Ascending aorta (tissue), 2 donors: ENCODE measurements at regions of chr19 and their contacts with region 1.

Region 1: DNA sequence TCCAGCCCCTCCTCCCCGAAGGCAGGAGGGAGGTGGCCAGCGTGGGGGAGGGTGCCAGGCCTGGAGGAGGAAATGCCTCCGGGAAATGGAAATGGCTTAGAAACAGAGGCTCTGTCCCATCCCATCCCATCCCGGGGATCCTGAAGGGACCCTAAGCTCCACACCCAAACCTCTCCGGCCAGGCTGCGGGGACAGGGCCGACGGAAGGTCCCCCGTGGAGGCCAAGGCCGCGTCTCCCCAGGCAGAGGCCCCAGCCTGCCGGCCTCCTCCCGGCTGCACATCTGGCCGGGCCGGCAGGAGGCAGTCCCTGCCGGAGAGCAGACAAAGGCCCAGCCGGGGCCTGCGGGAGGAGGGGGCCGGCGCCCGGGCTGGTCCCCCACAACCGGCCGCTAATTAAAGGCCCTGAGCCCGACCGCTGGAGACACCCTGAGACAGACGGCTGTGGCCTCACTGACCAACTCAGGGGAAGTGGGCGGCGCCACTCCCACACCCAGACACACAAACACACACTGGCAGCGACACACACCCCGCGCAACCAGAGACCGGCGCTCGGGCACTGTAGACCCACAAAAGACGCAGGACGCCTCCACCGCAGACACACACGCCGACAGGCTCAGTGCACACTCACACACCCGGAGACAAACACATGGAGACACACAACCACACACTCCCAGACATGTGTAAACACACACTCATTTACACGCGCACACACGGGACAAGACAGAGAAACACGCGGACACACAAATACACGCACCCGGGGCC is 1.1 kb downstream of the ADAMTS10 start:
- DNase-seq: peak; percentile 34 to 87
- H3K4me3 ChIP-seq: peak overlapping the region; percentile 61 to 80
- H3K27ac ChIP-seq: peak overlapping the region; percentile 90 to 94
- H3K4me1 ChIP-seq: peaks cover 11 to 30% of the 10 kb centered on the region in 2 donors
- H3K27me3 ChIP-seq: no peaks in the 10 kb centered on the region
- CTCF ChIP-seq: peak; percentile 2 to 35 (median 24)

Region 2: DNA sequence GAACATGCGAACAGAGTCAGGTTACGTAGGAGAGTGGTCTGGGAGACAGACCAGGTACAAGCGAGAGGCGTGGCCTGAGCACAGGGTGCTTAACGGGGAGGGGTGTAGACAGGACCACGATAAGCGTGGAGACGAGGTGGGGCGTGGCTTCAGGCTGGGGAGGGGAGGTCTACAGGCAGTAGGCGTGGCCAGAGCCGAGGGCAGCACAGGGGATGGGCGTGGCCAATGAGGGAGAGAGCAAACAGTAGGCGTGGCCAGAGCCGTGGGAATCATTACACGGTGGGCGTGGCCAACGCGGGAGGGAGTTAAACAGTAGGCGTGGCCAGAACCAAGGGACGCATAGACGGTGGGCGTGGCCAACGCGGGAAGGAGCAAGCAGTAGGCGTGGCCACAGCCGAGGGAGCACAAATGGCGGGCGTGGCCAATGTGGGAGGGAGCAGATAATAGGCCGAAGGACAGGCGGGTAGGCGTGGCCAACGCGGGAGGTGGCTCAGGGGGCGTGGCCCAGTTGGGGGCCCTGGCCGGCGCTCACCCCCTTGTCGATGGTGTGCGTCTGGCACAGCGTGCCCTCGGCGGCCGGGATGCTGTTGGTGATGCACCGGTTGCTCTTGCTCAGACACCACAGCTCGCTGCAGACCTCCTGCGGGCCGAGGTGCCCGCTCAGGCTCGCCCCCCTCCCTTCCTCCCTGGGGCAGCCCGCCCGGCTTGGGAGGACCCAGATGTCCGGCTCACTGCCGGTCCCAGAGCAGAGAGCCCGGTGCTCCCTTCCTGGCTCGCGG is 17.0 kb before region 1 on chr19:
- intact Hi-C with region 1: loop called (anchors 1 kb)
- DNase-seq: peak; percentile 95 to 99
- H3K4me3 ChIP-seq: peak overlapping the region; percentile 23 to 61
- H3K27ac ChIP-seq: peak overlapping the region; percentile 40 to 63
- H3K4me1 ChIP-seq: peaks cover 10 to 18% of the 10 kb centered on the region in 2 donors
- H3K27me3 ChIP-seq: no peaks in the 10 kb centered on the region
- CTCF ChIP-seq: no peak

Region 3: GRCh38 chr19:8626842-8627241 is 17.4 kb after region 1 on chr19:
- intact Hi-C with region 1: no loop called
- DNase-seq: no peak
- H3K4me3 ChIP-seq: no peak overlapping the region
- H3K27ac ChIP-seq: no peak overlapping the region
- H3K4me1 ChIP-seq: peaks cover 0 to 4% of the 10 kb centered on the region in 2 donors
- H3K27me3 ChIP-seq: no peaks in the 10 kb centered on the region
- CTCF ChIP-seq: no peak

Region 4: DNA sequence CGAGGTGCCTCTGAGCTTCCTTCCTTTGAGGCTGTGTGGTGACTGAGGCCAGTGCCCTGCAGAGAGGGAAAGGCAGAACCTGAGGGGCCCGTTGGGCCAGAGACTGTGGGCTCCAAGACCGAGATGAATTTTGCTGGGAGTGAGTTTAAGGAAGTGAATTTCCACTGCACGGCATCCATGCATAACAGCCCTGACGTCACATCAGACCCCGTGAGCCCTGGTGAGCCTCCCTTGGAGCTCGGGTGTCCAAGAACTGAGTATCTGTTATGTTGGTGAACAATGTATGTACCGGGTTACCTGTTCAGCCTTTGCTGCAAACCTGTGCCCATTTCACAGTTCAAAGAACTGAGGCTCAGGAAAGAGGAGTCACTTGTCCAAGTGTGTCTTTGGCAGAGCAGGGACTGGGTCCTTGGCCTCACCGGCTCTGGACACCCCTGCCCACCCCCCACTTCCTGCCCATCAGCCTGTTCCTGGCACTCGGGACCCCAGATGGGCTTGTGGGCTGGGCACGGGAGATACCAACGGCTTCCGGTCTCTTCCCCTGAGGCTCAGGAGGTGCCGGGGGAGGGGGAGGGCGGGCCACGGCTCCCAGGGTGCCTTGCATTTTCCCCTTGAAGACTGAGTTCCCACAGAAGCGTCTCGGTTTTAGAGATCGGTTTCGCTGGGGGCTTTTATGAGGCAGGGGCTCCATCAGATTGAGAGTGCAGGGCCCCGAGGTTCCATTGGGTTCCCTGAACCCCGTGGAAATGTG is 54.6 kb after region 1 on chr19:
- intact Hi-C with region 1: no loop called
- DNase-seq: no peak
- H3K4me3 ChIP-seq: no peak overlapping the region
- H3K27ac ChIP-seq: no peak overlapping the region
- H3K4me1 ChIP-seq: no peaks in the 10 kb centered on the region
- H3K27me3 ChIP-seq: no peaks in the 10 kb centered on the region
- CTCF ChIP-seq: no peak